Activated naive CD8-positive, alpha-beta T cell treated with anti-CD3 and anti-CD28 coated beads, Interleukin-2, amount 10 ng/mL, durations not matched to agents 7 days and 5 days (primary cell): ENCODE measurements at regions of chr2 and their contacts with region 1.

Region 1: GRCh38 chr2:86783615-86784339 is 6.9 kb downstream of the CD8A start:
- DNase-seq: no peak
- ATAC-seq: no peak
- H3K4me3 Mint-ChIP-seq: peak overlapping the region; percentile 93
- H3K27ac Mint-ChIP-seq: peak overlapping the region; percentile 99
- H3K4me1 Mint-ChIP-seq: peaks cover 58% of the 10 kb centered on the region
- H3K27me3 Mint-ChIP-seq: no peaks in the 10 kb centered on the region

Region 2: DNA sequence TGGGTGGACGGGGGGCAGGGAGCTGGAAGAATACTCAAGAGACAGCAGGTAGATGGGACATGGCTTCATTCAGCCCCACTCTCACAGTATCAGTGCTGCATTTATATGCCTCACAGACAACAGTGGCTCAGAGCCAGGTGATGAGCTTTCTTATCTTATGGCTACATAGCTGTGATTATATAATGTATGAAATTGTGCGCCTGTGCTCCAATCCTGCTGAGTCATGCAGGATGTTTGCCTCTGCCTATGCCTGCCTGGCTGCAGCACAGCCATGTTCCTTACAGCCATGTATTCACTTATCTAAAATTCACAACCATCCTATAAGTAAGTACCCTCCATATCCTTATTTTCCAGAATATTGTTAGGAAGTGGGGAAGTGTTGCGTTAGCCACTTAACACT is 122.4 kb before region 1 on chr2:
- POLR2A ChIA-PET with region 1: no interaction called
- DNase-seq: no peak
- ATAC-seq: no peak
- H3K4me3 Mint-ChIP-seq: no peak overlapping the region
- H3K27ac Mint-ChIP-seq: no peak overlapping the region
- H3K4me1 Mint-ChIP-seq: no peaks in the 10 kb centered on the region
- H3K27me3 Mint-ChIP-seq: no peaks in the 10 kb centered on the region

Region 3: GRCh38 chr2:86747711-86748639 is 35.8 kb before region 1 on chr2:
- POLR2A ChIA-PET with region 1: no interaction called
- DNase-seq: no peak
- ATAC-seq: no peak
- H3K4me3 Mint-ChIP-seq: no peak overlapping the region
- H3K27ac Mint-ChIP-seq: no peak overlapping the region
- H3K4me1 Mint-ChIP-seq: peaks cover 15% of the 10 kb centered on the region
- H3K27me3 Mint-ChIP-seq: no peaks in the 10 kb centered on the region

Region 4: DNA sequence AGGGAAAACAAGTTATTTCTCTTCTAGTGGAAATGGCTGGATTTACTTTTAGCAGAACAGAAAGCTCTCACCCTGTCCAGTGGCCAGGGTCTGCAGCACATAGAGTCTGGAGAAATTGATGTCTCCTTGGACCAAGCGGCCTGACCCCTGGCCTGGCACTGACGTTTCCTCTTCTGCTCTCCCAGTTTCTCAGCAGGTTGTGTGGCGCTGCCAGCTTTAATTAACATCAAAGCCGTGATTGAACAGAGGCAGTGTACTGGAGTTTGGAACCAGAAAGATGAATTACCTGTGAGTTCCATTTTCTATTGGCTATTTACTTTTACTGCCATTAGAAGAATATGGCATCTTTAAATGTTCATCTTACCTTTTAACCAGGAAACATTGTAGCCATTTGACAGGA is 13.9 kb before region 1 on chr2:
- POLR2A ChIA-PET with region 1: interaction called, 25 read pairs
- DNase-seq: no peak
- ATAC-seq: no peak
- H3K4me3 Mint-ChIP-seq: no peak overlapping the region
- H3K27ac Mint-ChIP-seq: no peak overlapping the region
- H3K4me1 Mint-ChIP-seq: peaks cover 16% of the 10 kb centered on the region
- H3K27me3 Mint-ChIP-seq: no peaks in the 10 kb centered on the region